A673 (cell line): ENCODE measurements at regions of chr10 and their contacts with region 1.

Region 1: GRCh38 chr10:88114368-88114767 is 250.9 kb downstream of the PTEN start:
- DNase-seq: peak; percentile 81
- H3K4me3 ChIP-seq: no peak overlapping the region
- H3K27ac ChIP-seq: no peak overlapping the region
- H3K4me1 ChIP-seq: peaks cover 4% of the 10 kb centered on the region
- H3K27me3 ChIP-seq: no peaks in the 10 kb centered on the region
- CTCF ChIP-seq: peak; percentile 78

Region 2: GRCh38 chr10:87850742-87851205 is 263.6 kb before region 1 on chr10:
- CTCF ChIA-PET with region 1: interaction called, 13 read pairs
- POLR2A ChIA-PET with region 1: no interaction called
- intact Hi-C with region 1: loop called (anchors 1 kb)
- DNase-seq: peak; percentile 74
- H3K4me3 ChIP-seq: no peak overlapping the region
- H3K27ac ChIP-seq: no peak overlapping the region
- H3K4me1 ChIP-seq: no peaks in the 10 kb centered on the region
- H3K27me3 ChIP-seq: no peaks in the 10 kb centered on the region
- CTCF ChIP-seq: peak; percentile 72

Region 3: DNA sequence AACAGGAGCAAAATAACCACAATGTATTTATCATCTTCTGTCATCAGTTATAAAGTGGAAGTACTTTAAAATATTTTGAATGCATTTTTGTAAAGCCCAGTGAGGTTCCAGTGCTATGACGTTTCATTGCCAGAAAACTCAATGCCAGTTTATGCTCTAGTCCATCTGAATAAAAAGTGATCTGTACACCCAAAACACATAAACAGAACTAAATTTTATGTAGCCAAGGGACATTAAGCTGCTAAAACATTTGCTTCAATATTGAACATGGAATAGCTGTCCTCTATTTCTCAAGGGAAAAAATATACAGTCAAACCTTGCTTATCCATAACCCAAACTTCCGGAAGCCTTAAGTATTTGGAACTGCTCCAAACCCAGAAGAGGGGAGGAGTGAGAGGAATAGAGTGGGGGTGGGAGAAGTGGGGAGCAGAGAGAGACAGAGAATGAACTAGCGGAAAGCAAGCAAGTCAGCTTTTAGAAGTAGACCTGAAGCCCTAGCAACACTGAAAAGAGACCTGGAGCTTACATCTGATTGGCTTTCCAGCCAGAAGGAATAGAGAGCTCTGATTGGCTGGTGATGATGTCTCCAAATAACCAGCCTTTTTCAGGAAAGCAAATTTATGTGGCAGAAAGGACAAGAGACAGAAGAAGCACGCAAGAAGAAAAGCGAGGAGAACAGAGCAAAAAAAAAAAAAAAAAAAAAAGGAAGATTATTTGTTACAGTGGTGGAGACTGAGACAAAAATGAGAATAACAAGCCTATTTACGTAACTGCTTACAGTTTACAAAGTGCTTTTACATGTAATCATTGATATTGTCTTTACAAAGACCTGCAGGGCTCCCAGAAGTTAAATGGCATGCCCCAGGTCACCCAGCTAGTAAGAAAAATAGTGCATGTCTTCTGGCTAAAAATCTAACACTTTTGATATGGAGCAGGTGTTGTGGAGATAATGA is 272.7 kb after region 1 on chr10:
- CTCF ChIA-PET with region 1: interaction called, 3 read pairs
- POLR2A ChIA-PET with region 1: no interaction called
- intact Hi-C with region 1: loop called (anchors 5 kb)
- DNase-seq: peak; percentile 73
- H3K4me3 ChIP-seq: no peak overlapping the region
- H3K27ac ChIP-seq: no peak overlapping the region
- H3K4me1 ChIP-seq: peaks cover 14% of the 10 kb centered on the region
- H3K27me3 ChIP-seq: no peaks in the 10 kb centered on the region
- CTCF ChIP-seq: no peak

Region 4: DNA sequence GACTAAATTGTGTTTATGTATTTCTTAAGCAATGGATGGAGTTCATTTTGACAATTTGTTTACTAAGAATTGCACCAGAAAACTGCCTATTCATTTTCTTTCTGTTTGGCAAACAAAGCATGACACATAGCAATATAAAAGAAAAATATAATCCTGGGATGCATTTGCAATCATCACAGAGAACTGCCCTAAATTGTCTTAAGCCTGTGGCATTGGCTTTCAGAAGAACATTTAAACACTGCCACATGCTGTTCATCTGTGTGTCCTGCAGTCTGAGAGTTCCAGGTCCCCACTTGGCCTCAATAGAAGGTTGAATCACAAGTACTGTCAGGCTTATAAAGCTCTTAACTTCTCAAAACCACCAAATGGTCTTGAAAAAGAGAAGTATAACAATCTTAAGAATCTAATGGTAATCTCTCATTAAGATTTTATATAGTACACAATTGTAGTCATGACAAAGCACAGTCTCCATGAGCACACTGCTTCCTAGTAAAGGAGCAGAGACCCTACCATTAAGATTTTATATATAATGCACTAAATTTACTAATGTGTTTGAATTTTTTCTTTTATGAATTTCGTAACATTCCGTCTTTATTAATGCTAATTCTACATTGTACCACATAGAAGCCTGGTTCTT is 438.9 kb after region 1 on chr10:
- CTCF ChIA-PET with region 1: no interaction called
- POLR2A ChIA-PET with region 1: no interaction called
- intact Hi-C with region 1: loop called (anchors 10 kb)
- DNase-seq: peak; percentile 70
- H3K4me3 ChIP-seq: no peak overlapping the region
- H3K27ac ChIP-seq: no peak overlapping the region
- H3K4me1 ChIP-seq: peaks cover 10% of the 10 kb centered on the region
- H3K27me3 ChIP-seq: no peaks in the 10 kb centered on the region
- CTCF ChIP-seq: peak; percentile 82